ENCODE measurements at regions of chr7 and their contacts with region 1.

Region 1: GRCh38 chr7:86908948-86909347 is 150.5 kb downstream of the ELAPOR2 start:
- DNase-seq: no peak

Region 2: DNA sequence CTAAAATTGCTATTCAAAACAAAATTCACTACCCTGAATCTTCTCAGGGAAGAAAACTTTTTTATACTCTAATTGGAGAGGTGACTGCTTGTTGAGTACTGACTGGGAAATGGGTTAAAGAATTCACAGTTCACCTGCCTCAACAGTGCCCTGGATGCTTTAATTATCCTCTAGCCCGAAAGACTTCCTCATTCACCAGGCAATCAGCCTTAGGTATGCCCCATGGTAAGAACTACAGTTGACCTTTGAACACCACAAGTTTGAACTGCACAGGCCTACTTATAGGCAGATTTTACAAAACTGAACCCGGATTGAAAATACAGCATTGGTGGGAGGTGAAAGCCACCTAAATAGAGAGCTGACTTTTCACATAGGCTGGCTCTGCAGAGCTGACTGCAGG is 24.8 kb before region 1 on chr7:
- intact Hi-C with region 1: loop called in 1 of 2 experiments (anchors 1 kb)
- DNase-seq: no peak

Measured in posterior vena cava (tissue), 2 donors.